Activated CD8-positive, alpha-beta T cell treated with anti-CD3 and anti-CD28 coated beads, Interleukin-2, amount 10 ng/mL, durations not matched to agents 7 days and 5 days (primary cell): ENCODE measurements at regions of chr17 and their contacts with region 1.

Region 1: DNA sequence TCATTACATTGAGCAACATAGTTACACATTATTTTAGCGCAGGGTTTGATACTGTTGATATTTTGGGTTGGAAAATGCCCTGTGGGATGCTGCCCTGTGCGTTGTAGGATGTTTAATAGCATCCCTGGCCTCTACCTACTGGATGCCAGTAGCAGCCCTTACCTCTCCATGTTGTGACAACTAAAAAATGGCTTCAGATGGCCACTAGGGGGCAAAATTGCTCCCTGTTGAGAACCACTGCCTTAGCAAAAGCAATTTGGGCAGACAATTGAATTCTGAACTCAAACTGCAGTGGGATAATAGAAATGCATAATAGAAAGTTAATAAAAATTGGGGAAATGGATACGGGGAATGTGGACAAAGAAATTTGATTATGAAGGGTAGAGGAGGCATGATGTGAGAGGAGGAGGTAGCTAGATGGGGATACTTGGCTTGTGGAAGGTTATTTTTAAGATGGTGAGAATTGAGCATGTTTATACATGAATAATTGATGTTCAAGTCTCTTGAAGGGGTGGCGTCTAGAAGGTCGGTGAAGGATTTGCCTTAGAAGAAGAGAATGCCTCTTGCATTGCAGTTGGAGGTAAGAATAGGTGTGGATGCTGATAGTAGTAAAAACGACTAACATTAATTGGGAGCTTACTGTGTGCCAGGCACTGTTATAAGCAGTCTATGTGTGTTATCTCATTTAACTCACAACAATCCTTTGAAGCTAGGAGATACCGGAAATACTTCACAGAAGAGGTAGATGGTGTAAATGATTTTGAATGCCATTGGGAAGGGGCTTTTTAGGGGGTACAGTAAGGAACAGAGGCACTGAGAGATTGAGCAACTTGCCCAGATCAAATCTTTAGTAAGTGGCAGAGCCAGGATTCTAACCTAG is 19.0 kb downstream of the HEATR9 start:
- DNase-seq: peak; percentile 84
- ATAC-seq: peak; percentile 92
- H3K4me3 Mint-ChIP-seq: no peak overlapping the region
- H3K27ac Mint-ChIP-seq: peak overlapping the region; percentile 61
- H3K4me1 Mint-ChIP-seq: peaks cover 22% of the 10 kb centered on the region
- H3K27me3 Mint-ChIP-seq: no peaks in the 10 kb centered on the region

Region 2: GRCh38 chr17:35731239-35731931 is 118.3 kb before region 1 on chr17 and contains the start of gene RASL10B:
- CTCF ChIA-PET with region 1: no interaction called
- POLR2A ChIA-PET with region 1: no interaction called
- DNase-seq: no peak
- ATAC-seq: peak; percentile 59
- H3K4me3 Mint-ChIP-seq: peak within 1 kb of the TSS; percentile 38
- H3K27ac Mint-ChIP-seq: no peak within 1 kb of the TSS
- H3K4me1 Mint-ChIP-seq: peaks cover 13% of the 10 kb centered on the region
- H3K27me3 Mint-ChIP-seq: peaks cover 20% of the 10 kb centered on the region
- total RNA-seq, gene RASL10B: 0.10 TPM in 1 of 2 experiments, not detected in the other

Region 3: GRCh38 chr17:35870906-35871819 is 21.5 kb after region 1 on chr17:
- CTCF ChIA-PET with region 1: interaction called, 49 read pairs
- POLR2A ChIA-PET with region 1: interaction called, 3 read pairs
- DNase-seq: peak; percentile 68
- ATAC-seq: peak; percentile 61
- H3K4me3 Mint-ChIP-seq: no peak overlapping the region
- H3K27ac Mint-ChIP-seq: peak overlapping the region; percentile 69
- H3K4me1 Mint-ChIP-seq: peaks cover 65% of the 10 kb centered on the region
- H3K27me3 Mint-ChIP-seq: no peaks in the 10 kb centered on the region

Region 4: DNA sequence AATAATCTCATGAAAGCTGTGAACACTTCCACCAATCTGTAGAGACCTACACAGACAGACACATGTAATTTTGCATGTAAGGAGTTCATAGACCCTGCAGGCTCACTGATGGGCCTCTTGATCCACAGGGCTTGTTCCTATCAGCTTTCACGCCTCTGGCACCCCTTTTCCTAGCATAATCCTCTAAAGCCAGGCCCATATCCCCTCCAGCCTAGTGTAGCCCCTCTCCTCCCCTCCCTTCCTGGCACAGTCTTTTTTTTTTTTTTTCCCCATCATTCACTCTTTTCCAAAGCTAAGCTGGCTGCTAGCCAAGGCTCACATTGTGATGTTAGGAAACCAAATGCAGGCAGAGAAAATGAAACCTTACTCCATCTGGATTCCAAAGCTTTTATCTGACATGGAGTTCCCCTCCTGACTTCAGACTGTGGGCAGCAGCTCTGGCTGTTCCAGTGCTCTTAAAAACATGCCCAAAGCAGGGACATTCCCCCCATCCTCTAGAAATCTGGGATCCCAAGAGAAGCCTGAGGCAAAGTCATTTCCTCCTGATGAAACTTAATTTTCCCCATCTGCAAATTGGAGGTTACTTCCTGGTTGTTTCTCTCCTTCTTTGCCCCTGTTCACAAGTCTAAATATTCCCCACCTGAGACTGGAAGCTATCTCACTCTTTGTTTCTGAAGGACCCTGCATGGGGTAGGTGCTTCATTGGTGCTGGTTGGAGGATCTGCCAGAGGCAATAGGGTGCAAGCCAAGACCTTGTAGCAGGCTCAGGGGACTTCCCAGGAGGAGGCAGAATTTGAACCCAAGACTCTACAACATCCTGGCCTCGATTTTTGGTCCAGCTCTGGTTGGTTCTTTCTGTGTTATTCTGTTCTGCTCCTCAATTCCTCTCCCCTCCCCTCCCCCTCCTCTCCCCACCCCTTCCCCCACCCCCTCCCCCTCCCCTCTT is 40.4 kb after region 1 on chr17:
- CTCF ChIA-PET with region 1: interaction called, 25 read pairs
- POLR2A ChIA-PET with region 1: interaction called, 3 read pairs
- DNase-seq: no peak
- ATAC-seq: no peak
- H3K4me3 Mint-ChIP-seq: peak overlapping the region; percentile 42
- H3K27ac Mint-ChIP-seq: peak overlapping the region; percentile 83
- H3K4me1 Mint-ChIP-seq: peaks cover 77% of the 10 kb centered on the region
- H3K27me3 Mint-ChIP-seq: no peaks in the 10 kb centered on the region

Region 5: DNA sequence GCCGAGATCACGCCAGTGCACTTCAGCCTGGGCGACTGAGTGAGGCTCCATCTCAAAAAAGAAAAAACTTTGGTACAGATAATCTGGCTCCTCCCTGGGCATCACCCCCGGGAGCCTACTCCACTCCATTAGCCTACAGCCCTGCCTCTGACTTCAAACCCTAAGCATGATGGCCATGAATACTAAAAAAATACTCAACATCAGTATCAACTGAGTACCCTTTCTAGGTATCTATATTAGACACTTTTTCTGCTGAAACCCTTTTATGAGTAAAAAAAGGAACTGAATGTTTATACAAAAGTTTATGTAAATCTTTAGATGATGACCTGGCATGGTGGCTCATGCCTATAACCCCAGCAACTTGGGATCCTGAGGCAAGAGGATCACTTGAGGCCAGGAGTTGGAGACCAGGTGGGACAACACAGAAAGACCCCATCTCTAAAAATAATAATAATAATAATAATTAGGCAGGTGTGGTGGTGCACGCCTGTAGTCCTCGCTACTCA is 74.0 kb after region 1 on chr17:
- CTCF ChIA-PET with region 1: interaction called, 12 read pairs
- POLR2A ChIA-PET with region 1: no interaction called
- DNase-seq: no peak
- ATAC-seq: no peak
- H3K4me3 Mint-ChIP-seq: no peak overlapping the region
- H3K27ac Mint-ChIP-seq: no peak overlapping the region
- H3K4me1 Mint-ChIP-seq: peaks cover 61% of the 10 kb centered on the region
- H3K27me3 Mint-ChIP-seq: no peaks in the 10 kb centered on the region

Region 6: GRCh38 chr17:35969558-35970380 is 120.1 kb after region 1 on chr17:
- CTCF ChIA-PET with region 1: interaction called, 19 read pairs
- POLR2A ChIA-PET with region 1: no interaction called
- DNase-seq: peak; percentile 86
- ATAC-seq: peak; percentile 72
- H3K4me3 Mint-ChIP-seq: no peak overlapping the region
- H3K27ac Mint-ChIP-seq: no peak overlapping the region
- H3K4me1 Mint-ChIP-seq: peaks cover 7% of the 10 kb centered on the region
- H3K27me3 Mint-ChIP-seq: peaks cover 6% of the 10 kb centered on the region

Region 7: DNA sequence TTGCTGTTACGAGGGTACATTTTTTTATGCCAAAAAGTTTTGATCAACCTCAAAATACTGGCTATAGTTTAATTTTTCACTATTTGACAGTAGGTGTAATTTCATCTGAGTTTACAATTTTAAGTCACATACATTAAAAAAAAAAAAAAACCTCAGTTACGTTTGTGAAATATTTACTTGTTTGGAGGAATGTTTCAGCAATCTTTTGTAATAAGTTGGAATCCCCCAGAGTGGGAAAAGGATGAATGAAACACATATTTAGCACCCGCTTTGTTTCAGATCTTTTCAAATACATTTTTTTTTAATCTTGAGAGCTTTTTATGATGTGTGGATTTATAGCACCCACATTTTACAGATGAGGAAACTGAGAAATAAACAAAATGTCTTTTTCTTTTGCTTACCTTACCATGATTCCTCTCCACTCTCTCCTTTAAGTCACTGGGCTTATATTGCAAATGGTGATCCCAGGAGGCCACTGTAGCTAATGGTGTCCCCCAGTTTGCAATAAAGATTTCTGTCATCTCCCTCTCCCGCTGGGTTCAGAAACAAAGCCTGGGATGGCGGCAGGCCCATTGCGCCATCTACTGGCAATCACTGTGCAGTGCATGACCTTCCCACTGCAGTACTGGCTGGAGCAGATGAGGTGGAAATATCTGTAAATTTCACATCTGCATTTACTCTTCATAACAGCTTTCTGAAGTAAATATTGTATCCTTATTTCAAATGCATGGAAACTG is 299.0 kb after region 1 on chr17:
- CTCF ChIA-PET with region 1: interaction called, 34 read pairs
- POLR2A ChIA-PET with region 1: no interaction called
- DNase-seq: peak; percentile 76
- ATAC-seq: peak; percentile 95
- H3K4me3 Mint-ChIP-seq: no peak overlapping the region
- H3K27ac Mint-ChIP-seq: no peak overlapping the region
- H3K4me1 Mint-ChIP-seq: peaks cover 8% of the 10 kb centered on the region
- H3K27me3 Mint-ChIP-seq: peaks cover 32% of the 10 kb centered on the region